Dendritic cell treated with granulocyte-macrophage colony-stimulating factor and Interleukin-4, amounts not matched to agents 40 ng/mL and 50 ng/mL, for 4 days (primary cell): ENCODE measurements at regions of chr10 and their contacts with region 1.

Region 1: GRCh38 chr10:88108115-88108610 is 244.7 kb downstream of the PTEN start:
- H3K4me3 Mint-ChIP-seq: no peak overlapping the region
- H3K27ac Mint-ChIP-seq: peak overlapping the region; percentile 71
- H3K4me1 Mint-ChIP-seq: peaks cover 65% of the 10 kb centered on the region
- H3K27me3 Mint-ChIP-seq: no peaks in the 10 kb centered on the region

Region 2: GRCh38 chr10:88004451-88004850 is 103.7 kb before region 1 on chr10:
- intact Hi-C with region 1: no loop called
- H3K4me3 Mint-ChIP-seq: no peak overlapping the region
- H3K27ac Mint-ChIP-seq: no peak overlapping the region
- H3K4me1 Mint-ChIP-seq: no peaks in the 10 kb centered on the region
- H3K27me3 Mint-ChIP-seq: no peaks in the 10 kb centered on the region

Region 3: GRCh38 chr10:88042160-88043100 is 65.7 kb before region 1 on chr10:
- intact Hi-C with region 1: loop called (anchors 10 kb)
- H3K4me3 Mint-ChIP-seq: no peak overlapping the region
- H3K27ac Mint-ChIP-seq: peak overlapping the region; percentile 82
- H3K4me1 Mint-ChIP-seq: peaks cover 68% of the 10 kb centered on the region
- H3K27me3 Mint-ChIP-seq: no peaks in the 10 kb centered on the region

Region 4: GRCh38 chr10:88064608-88065382 is 43.4 kb before region 1 on chr10:
- intact Hi-C with region 1: loop called (anchors 5 kb)
- H3K4me3 Mint-ChIP-seq: no peak overlapping the region
- H3K27ac Mint-ChIP-seq: peak overlapping the region; percentile 12
- H3K4me1 Mint-ChIP-seq: peaks cover 86% of the 10 kb centered on the region
- H3K27me3 Mint-ChIP-seq: no peaks in the 10 kb centered on the region